Head of caudate nucleus (tissue), 42 donors: ENCODE measurements at regions of chr15 and their contacts with region 1.

Region 1: DNA sequence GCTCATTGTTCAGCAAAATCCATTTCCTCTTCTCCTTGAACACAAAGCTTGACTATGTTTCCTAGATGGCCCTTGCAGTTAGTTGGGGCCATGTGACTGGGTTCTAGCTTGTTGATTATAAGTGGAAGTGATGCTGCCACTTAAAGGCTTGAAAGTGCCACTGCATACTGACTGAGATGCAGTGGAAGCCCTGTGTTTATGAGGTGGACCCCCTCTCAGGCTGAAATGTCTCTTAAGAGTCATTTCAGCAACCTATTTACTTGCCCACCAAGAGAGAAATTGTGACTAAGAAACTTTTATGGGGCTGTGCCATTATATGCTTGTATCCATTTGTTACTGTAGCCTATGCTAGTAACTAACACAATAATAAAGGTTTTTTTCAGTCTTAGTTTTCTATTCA is 8.4 kb upstream of the ANP32A start:
- DNase-seq: peak in 28 of 42 donors; percentile 29 to 84 (median 62)

Region 2: DNA sequence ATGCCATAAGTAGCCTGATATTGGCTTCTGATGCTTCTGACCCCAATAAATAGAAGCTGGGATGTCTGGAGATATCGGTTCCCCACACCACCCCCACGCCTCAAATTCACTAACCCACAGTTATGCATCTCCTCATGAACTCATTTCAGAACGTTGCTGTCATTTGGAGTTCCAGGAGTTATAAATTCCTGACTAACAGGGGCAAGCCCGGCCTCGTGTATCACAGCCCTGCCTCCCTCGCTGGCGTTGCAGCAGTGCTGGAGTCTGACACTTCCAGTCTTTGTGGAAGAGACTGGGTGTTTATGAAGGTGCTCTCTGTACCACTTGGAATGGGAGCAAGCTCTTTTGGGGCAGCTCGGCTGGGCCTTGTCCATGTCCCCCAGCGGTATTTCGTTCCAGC is 109.4 kb before region 1 on chr15:
- intact Hi-C with region 1: loop called (anchors 5 kb)
- DNase-seq: peak in 2 of 42 donors; percentile 20 to 29

Region 3: GRCh38 chr15:68749793-68750192 is 79.3 kb before region 1 on chr15:
- intact Hi-C with region 1: no loop called
- DNase-seq: peak in 1 of 42 donors; percentile 18

Region 4: GRCh38 chr15:68764090-68764489 is 65.0 kb before region 1 on chr15:
- intact Hi-C with region 1: no loop called
- DNase-seq: no peak